Caco-2 (cell line): ENCODE measurements at regions of chr7 and their contacts with region 1.

Region 1: GRCh38 chr7:67625257-67625737 is 628.7 kb downstream of the TYW1 start:
- DNase-seq: peak; percentile 67 to 72
- H3K4me3 ChIP-seq: no peak overlapping the region
- H3K4me3 Mint-ChIP-seq: no peak overlapping the region
- H3K27ac Mint-ChIP-seq: no peak overlapping the region
- H3K4me1 ChIP-seq: no peaks in the 10 kb centered on the region
- H3K4me1 Mint-ChIP-seq: no peaks in the 10 kb centered on the region
- H3K27me3 ChIP-seq: no peaks in the 10 kb centered on the region
- H3K27me3 Mint-ChIP-seq: peaks cover 40% of the 10 kb centered on the region
- CTCF ChIP-seq: peak; percentile 65 to 77

Region 2: DNA sequence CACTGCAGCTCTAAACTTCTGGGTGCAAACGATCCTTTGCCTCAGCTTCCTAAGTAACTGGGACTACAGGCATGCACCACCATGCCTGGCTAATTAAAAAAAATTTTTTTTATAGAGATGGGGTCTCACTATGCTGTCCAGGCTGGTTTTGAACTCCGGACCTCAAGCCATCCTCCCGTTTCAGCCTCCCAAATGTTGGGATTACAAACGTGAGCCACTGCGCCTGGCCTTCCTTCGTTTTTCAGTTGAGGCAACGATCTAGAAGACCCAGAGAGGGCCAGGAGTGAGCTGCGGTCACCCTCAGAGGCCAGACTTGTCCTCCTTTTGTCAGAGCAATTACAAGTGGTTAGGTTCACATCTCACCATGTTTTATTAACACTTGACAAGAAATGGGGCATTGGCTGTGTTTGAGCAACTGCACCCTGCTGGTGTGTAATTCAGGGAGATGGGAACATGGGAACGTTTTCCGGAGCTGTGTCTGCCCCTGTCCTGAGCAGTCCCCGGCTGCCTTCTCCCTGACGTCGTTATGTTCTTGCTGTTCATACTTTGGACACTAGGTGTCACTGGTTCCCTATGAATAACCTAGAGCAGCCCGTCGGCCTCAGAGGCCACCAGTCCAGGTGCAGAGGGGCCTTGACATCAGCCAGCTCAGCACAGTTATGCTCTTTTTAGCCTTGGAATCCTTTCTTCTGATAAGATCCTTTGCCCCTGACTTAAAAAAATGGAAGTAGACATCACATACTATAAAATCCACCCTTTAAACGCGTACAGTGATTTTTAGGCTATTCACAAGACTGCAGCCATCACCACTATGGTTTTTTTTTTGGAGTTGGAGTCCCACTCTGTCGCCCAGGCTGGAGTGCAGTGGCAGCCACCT is 253.6 kb before region 1 on chr7:
- CTCF ChIA-PET with region 1: no interaction called
- POLR2A ChIA-PET with region 1: no interaction called
- intact Hi-C with region 1: loop called (anchors 10 kb)
- DNase-seq: peak; percentile 76 to 86
- H3K4me3 ChIP-seq: no peak overlapping the region
- H3K4me3 Mint-ChIP-seq: no peak overlapping the region
- H3K27ac Mint-ChIP-seq: no peak overlapping the region
- H3K4me1 ChIP-seq: peaks cover 8% of the 10 kb centered on the region; the same call in 1 of the 2 replicates
- H3K4me1 Mint-ChIP-seq: no peaks in the 10 kb centered on the region
- H3K27me3 ChIP-seq: no peaks in the 10 kb centered on the region
- H3K27me3 Mint-ChIP-seq: peaks cover 9% of the 10 kb centered on the region
- CTCF ChIP-seq: peak; percentile 80 to 85

Region 3: GRCh38 chr7:67842571-67842970 is 217.3 kb after region 1 on chr7:
- CTCF ChIA-PET with region 1: no interaction called
- POLR2A ChIA-PET with region 1: no interaction called
- intact Hi-C with region 1: no loop called
- DNase-seq: no peak
- H3K4me3 ChIP-seq: no peak overlapping the region
- H3K4me3 Mint-ChIP-seq: no peak overlapping the region
- H3K27ac Mint-ChIP-seq: no peak overlapping the region
- H3K4me1 ChIP-seq: no peaks in the 10 kb centered on the region
- H3K4me1 Mint-ChIP-seq: no peaks in the 10 kb centered on the region
- H3K27me3 ChIP-seq: no peaks in the 10 kb centered on the region
- H3K27me3 Mint-ChIP-seq: no peaks in the 10 kb centered on the region
- CTCF ChIP-seq: no peak

Region 4: DNA sequence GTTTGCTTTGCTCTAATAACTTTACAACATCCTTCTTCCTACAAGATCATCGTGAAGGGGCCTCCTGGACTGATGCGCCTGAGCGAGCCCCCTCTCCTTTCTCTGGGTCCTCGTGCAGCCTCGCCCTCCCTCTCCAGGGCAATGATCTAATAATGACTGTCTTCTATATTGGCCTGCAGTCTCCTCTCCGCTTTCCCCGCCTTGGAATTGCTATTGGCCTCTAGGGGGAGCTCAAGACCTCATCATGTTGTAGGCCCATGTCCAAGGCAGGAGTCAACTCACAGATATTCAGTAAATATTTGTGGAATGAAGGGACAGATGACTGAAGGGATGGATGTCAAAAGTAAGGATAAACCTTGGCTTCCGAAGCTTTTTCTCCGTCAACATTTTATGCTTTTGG is 551.7 kb after region 1 on chr7:
- CTCF ChIA-PET with region 1: no interaction called
- POLR2A ChIA-PET with region 1: no interaction called
- intact Hi-C with region 1: loop called (anchors 5 kb)
- DNase-seq: peak; percentile 38 to 49
- H3K4me3 ChIP-seq: no peak overlapping the region
- H3K4me3 Mint-ChIP-seq: no peak overlapping the region
- H3K27ac Mint-ChIP-seq: no peak overlapping the region
- H3K4me1 ChIP-seq: no peaks in the 10 kb centered on the region
- H3K4me1 Mint-ChIP-seq: no peaks in the 10 kb centered on the region
- H3K27me3 ChIP-seq: no peaks in the 10 kb centered on the region
- H3K27me3 Mint-ChIP-seq: no peaks in the 10 kb centered on the region
- CTCF ChIP-seq: peak; percentile 36 to 61